CD4-positive, alpha-beta memory T cell (primary cell): ENCODE measurements at regions of chr17 and their contacts with region 1.

Region 1: GRCh38 chr17:50541716-50542688 is 5.0 kb upstream of the SPATA20 start:
- DNase-seq: peak; percentile 74 to 86 (median 81)
- H3K4me3 ChIP-seq: peak overlapping the region; percentile 45 to 51
- H3K4me3 Mint-ChIP-seq: peak overlapping the region; percentile 80 to 89 (median 86)
- H3K27ac ChIP-seq: peak overlapping the region; percentile 60
- H3K27ac Mint-ChIP-seq: peak overlapping the region; percentile 17 to 93 (median 77)
- H3K4me1 ChIP-seq: peaks cover 18% of the 10 kb centered on the region
- H3K4me1 Mint-ChIP-seq: peaks cover 8 to 24% (median 18%) of the 10 kb centered on the region in 4 donors
- H3K27me3 ChIP-seq: no peaks in the 10 kb centered on the region
- H3K27me3 Mint-ChIP-seq: peaks cover 1 to 3% of the 10 kb centered on the region in 2 donors

Region 2: GRCh38 chr17:50507871-50508572 is 34.0 kb before region 1 on chr17 and contains the start of gene MYCBPAP:
- CTCF ChIA-PET with region 1: no interaction called
- POLR2A ChIA-PET with region 1: interaction called, 4 read pairs
- intact Hi-C with region 1: loop called (anchors 5 kb)
- DNase-seq: peak; percentile 74 to 89 (median 76)
- H3K4me3 ChIP-seq: peak within 1 kb of the TSS; percentile 19 to 63
- H3K4me3 Mint-ChIP-seq: peak within 1 kb of the TSS; percentile 87 to 98 (median 90)
- H3K27ac ChIP-seq: peak within 1 kb of the TSS; percentile 72
- H3K27ac Mint-ChIP-seq: peak within 1 kb of the TSS; percentile 90 to 97 (median 92)
- H3K4me1 ChIP-seq: peaks cover 31% of the 10 kb centered on the region
- H3K4me1 Mint-ChIP-seq: peaks cover 19 to 53% (median 34%) of the 10 kb centered on the region in 4 donors
- H3K27me3 ChIP-seq: no peaks in the 10 kb centered on the region
- H3K27me3 Mint-ChIP-seq: no peaks in the 10 kb centered on the region
- total RNA-seq, gene MYCBPAP: 5.3 to 6.8 TPM